ENCODE measurements at regions of chr15 and their contacts with region 1.

Region 1: GRCh38 chr15:57340682-57341259 is 35.5 kb upstream of the CGNL1 start:
- DNase-seq: peak; percentile 66
- ATAC-seq: peak; percentile 66
- H3K4me3 ChIP-seq: no peak overlapping the region
- H3K27ac ChIP-seq: no peak overlapping the region
- H3K4me1 ChIP-seq: no peaks in the 10 kb centered on the region
- H3K27me3 ChIP-seq: no peaks in the 10 kb centered on the region
- CTCF ChIP-seq: peak; percentile 87

Region 2: GRCh38 chr15:57462381-57462780 is 121.6 kb after region 1 on chr15:
- CTCF ChIA-PET with region 1: no interaction called
- POLR2A ChIA-PET with region 1: no interaction called
- intact Hi-C with region 1: loop called (anchors 2 kb)
- DNase-seq: peak; percentile 81
- ATAC-seq: peak; percentile 99
- H3K4me3 ChIP-seq: no peak overlapping the region
- H3K27ac ChIP-seq: peak overlapping the region; percentile 80; the same call in 1 of the 2 replicates
- H3K4me1 ChIP-seq: peaks cover 21% of the 10 kb centered on the region
- H3K27me3 ChIP-seq: no peaks in the 10 kb centered on the region
- CTCF ChIP-seq: peak; percentile 54; the same call in 1 of the 2 replicates

Region 3: DNA sequence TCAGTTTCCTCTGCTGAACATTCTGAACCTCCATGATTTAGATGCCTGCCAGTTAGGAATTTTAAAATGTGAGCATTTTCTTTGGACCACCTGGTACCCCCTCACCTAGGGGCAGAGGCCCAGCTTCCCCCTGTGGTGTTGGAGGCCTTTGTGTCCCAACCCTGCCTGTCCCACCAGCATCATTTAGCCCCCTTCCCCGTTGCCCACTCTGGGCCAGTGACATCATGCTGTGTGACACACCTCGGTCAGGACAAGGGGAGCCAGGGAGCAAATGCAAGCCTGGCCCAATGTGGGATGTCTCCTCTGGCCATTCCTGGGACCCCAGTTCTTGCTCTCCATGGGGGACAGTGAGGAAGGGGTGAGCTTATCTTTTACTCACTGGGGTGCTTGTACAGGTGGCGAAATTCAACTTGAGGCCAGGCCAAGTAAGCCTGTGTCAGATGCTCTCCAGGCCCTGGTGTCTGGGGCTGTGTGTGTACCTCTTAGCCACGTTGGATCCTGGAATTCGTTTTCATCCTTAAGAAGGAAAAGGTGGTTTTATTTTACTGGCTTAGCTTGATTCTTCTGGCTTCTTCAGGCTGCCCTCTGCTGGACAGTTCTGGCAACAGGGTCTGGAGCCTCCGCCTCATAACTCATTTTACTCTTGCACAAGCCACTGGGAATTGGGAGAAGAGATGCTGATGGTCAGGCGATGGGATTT is 201.2 kb after region 1 on chr15:
- CTCF ChIA-PET with region 1: interaction called, 6 read pairs
- POLR2A ChIA-PET with region 1: no interaction called
- intact Hi-C with region 1: loop called (anchors 1 kb)
- DNase-seq: peak; percentile 74
- ATAC-seq: peak; percentile 73
- H3K4me3 ChIP-seq: no peak overlapping the region
- H3K27ac ChIP-seq: no peak overlapping the region
- H3K4me1 ChIP-seq: no peaks in the 10 kb centered on the region
- H3K27me3 ChIP-seq: no peaks in the 10 kb centered on the region
- CTCF ChIP-seq: peak; percentile 81

Measured in PC-3 (cell line).